ENCODE measurements at regions of chr11 and their contacts with region 1.

Region 1: DNA sequence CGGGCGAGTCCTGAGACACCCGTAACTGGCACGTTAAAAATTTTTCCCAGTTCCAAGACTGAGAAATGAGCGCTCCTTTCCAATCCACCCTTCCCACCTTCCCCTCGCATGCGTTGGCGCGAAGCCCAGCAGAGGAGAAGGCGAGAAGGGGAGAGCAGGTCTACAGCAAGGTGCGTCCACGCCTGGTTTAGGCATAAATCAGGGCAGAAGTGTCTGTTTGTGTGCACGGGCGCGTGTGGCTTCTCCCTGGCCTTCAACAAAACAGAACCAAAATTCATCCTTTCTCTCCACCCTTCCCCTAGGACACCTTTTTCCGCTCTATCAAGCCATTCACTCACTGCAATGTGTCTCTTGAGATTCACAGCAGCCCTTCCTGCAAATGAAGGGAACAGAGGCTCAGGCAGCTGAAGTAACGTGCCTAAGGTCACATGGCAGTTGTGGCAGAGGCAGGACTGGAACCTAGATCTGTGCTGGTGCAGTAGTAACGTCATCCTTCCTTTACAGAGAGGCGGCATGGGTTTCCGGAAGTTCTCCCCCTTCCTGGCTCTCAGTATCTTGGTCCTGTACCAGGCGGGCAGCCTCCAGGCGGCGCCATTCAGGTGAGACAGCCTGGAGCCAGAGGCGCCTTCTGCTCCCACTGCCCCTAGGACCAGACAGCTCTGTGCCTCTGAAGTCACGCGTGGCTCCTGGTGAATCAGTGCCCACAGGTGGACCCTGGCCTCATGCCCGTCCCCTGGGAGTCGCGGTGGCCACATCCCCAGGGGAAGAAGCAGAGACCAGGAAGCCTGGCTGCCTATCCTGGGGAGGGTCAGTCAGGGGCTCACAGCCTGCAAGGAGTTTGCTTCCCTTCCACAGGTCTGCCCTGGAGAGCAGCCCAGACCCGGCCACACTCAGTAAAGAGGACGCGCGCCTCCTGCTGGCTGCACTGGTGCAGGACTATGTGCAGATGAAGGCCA is 1.1 kb downstream of the CALCB start:
- DNase-seq: peak; percentile 85 to 99 (median 94)
- ATAC-seq: peak; percentile 90 to 95 (median 92)
- H3K4me3 ChIP-seq: peak overlapping the region; percentile 0 to 55 (median 34)
- H3K27ac ChIP-seq: peak overlapping the region in 3 of 4 donors; percentile 22 to 57 (median 41)
- H3K4me1 ChIP-seq: no peaks in the 10 kb centered on the region
- H3K27me3 ChIP-seq: no peaks in the 10 kb centered on the region
- CTCF ChIP-seq: peak; percentile 72 to 88 (median 83)

Region 2: GRCh38 chr11:14537134-14537599 is 537.3 kb before region 1 on chr11:
- intact Hi-C with region 1: loop called in 1 of 3 experiments (anchors 10 kb)
- DNase-seq: peak in 1 of 6 donors; percentile 26
- ATAC-seq: peak in 3 of 4 donors; percentile 66 to 74 (median 67)
- H3K4me3 ChIP-seq: no peak overlapping the region
- H3K27ac ChIP-seq: no peak overlapping the region
- H3K4me1 ChIP-seq: peaks cover 15 to 29% (median 21%) of the 10 kb centered on the region in 3 donors
- H3K27me3 ChIP-seq: no peaks in the 10 kb centered on the region
- CTCF ChIP-seq: peak; percentile 60 to 70 (median 63)

Region 3: GRCh38 chr11:15318814-15319213 is 244.3 kb after region 1 on chr11:
- intact Hi-C with region 1: no loop called
- DNase-seq: no peak
- ATAC-seq: no peak
- H3K4me3 ChIP-seq: no peak overlapping the region
- H3K27ac ChIP-seq: no peak overlapping the region
- H3K4me1 ChIP-seq: no peaks in the 10 kb centered on the region
- H3K27me3 ChIP-seq: no peaks in the 10 kb centered on the region
- CTCF ChIP-seq: no peak

Region 4: GRCh38 chr11:15539645-15540044 is 465.2 kb after region 1 on chr11:
- intact Hi-C with region 1: no loop called
- DNase-seq: no peak
- ATAC-seq: no peak
- H3K4me3 ChIP-seq: no peak overlapping the region
- H3K27ac ChIP-seq: no peak overlapping the region
- H3K4me1 ChIP-seq: no peaks in the 10 kb centered on the region
- H3K27me3 ChIP-seq: no peaks in the 10 kb centered on the region
- CTCF ChIP-seq: no peak